Naive thymus-derived CD4-positive, alpha-beta T cell (primary cell): ENCODE measurements at regions of chr4 and their contacts with region 1.

Region 1: GRCh38 chr4:53929955-53930798 is 134.2 kb downstream of the CHIC2 start:
- DNase-seq: peak in 8 of 9 donors; percentile 24 to 56 (median 49)
- ATAC-seq: peak; percentile 80
- H3K4me3 ChIP-seq: no peak overlapping the region
- H3K4me3 Mint-ChIP-seq: no peak overlapping the region
- H3K27ac ChIP-seq: no peak overlapping the region
- H3K27ac Mint-ChIP-seq: no peak overlapping the region
- H3K4me1 ChIP-seq: no peaks in the 10 kb centered on the region
- H3K4me1 Mint-ChIP-seq: no peaks in the 10 kb centered on the region
- H3K27me3 ChIP-seq: no peaks in the 10 kb centered on the region
- H3K27me3 Mint-ChIP-seq: peaks cover 2 to 12% (median 11%) of the 10 kb centered on the region in 5 donors

Region 2: GRCh38 chr4:52376132-52376704 is 1554.0 kb before region 1 on chr4:
- CTCF ChIA-PET with region 1: no interaction called
- POLR2A ChIA-PET with region 1: no interaction called
- intact Hi-C with region 1: loop called in 1 of 2 experiments (anchors 5 kb)
- DNase-seq: peak in 5 of 9 donors; percentile 17 to 25 (median 21)
- ATAC-seq: no peak
- H3K4me3 ChIP-seq: no peak overlapping the region
- H3K4me3 Mint-ChIP-seq: no peak overlapping the region
- H3K27ac ChIP-seq: no peak overlapping the region
- H3K27ac Mint-ChIP-seq: no peak overlapping the region
- H3K4me1 ChIP-seq: no peaks in the 10 kb centered on the region
- H3K4me1 Mint-ChIP-seq: peaks cover 0 to 3% (median 0%) of the 10 kb centered on the region in 7 donors
- H3K27me3 ChIP-seq: peaks cover 0 to 5% of the 10 kb centered on the region in 2 donors
- H3K27me3 Mint-ChIP-seq: peaks cover 8 to 34% (median 15%) of the 10 kb centered on the region in 5 donors

Region 3: GRCh38 chr4:54099748-54100574 is 169.8 kb after region 1 on chr4 and contains the start of gene GSX2:
- CTCF ChIA-PET with region 1: no interaction called
- POLR2A ChIA-PET with region 1: no interaction called
- intact Hi-C with region 1: loop called in 1 of 2 experiments (anchors 5 kb)
- DNase-seq: no peak
- ATAC-seq: peak; percentile 17
- H3K4me3 ChIP-seq: peak within 1 kb of the TSS; percentile 38
- H3K4me3 Mint-ChIP-seq: peak within 1 kb of the TSS; percentile 46 to 81 (median 72)
- H3K27ac ChIP-seq: no peak within 1 kb of the TSS
- H3K27ac Mint-ChIP-seq: peak within 1 kb of the TSS in 2 of 9 donors; percentile 38 to 56
- H3K4me1 ChIP-seq: peaks cover 20 to 24% of the 10 kb centered on the region in 2 donors
- H3K4me1 Mint-ChIP-seq: peaks cover 19 to 50% (median 33%) of the 10 kb centered on the region in 7 donors
- H3K27me3 ChIP-seq: peaks cover 22 to 46% of the 10 kb centered on the region in 2 donors
- H3K27me3 Mint-ChIP-seq: peaks cover 79 to 93% (median 88%) of the 10 kb centered on the region in 5 donors
- total RNA-seq, gene GSX2: not detected

Region 4: GRCh38 chr4:54217642-54218495 is 287.7 kb after region 1 on chr4:
- CTCF ChIA-PET with region 1: interaction called, 88 read pairs
- POLR2A ChIA-PET with region 1: no interaction called
- intact Hi-C with region 1: loop called (anchors 1 kb)
- DNase-seq: peak in 8 of 9 donors; percentile 35 to 73 (median 58)
- ATAC-seq: peak; percentile 83
- H3K4me3 ChIP-seq: no peak overlapping the region
- H3K4me3 Mint-ChIP-seq: peak overlapping the region in 8 of 10 donors; percentile 29 to 56 (median 50)
- H3K27ac ChIP-seq: no peak overlapping the region
- H3K27ac Mint-ChIP-seq: no peak overlapping the region
- H3K4me1 ChIP-seq: peaks cover 0 to 5% of the 10 kb centered on the region in 2 donors
- H3K4me1 Mint-ChIP-seq: peaks cover 0 to 7% (median 5%) of the 10 kb centered on the region in 7 donors
- H3K27me3 ChIP-seq: peaks cover 0 to 3% of the 10 kb centered on the region in 2 donors
- H3K27me3 Mint-ChIP-seq: peaks cover 27 to 60% (median 43%) of the 10 kb centered on the region in 5 donors